Natural killer cell (primary cell): ENCODE measurements at regions of chr18 and their contacts with region 1.

Region 1: DNA sequence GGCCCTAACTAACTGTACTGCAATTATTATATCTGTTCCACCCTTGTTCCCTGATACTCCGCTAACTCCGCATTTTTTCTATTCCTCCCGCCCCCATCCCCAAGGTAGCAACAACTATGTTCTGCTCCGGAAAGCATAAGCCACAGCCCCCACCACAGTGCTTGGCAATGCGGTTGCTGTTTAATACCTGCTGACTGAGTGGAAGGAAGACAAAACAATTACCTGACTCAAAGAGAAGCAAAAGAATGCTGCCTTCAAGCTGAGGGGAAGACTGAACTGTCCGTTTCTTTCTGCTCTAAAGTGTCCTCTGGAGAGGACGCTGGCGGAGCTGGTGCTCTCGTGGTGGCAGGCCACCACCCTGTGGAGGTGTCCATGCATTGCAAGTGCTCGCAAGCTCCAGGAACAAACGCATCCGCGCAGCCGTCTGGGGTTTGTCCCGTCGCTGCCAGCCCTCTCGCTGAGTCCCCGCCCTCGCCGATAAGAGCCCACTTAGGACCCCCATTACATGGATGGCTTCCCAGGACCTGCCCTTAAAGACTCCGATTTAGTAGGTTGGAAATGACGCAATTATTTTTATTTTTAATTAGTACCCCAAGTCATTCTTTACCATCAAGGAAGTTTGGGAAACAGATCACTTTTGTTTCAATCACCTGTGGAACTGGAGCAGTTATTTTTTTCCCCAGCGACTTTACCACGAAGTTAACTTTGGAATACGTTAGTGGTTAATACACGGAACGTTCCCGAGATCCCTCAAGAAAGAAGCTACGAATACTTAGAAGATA is 1.6 kb upstream of the MYL12A start:
- DNase-seq: peak; percentile 73 to 88
- ATAC-seq: peak; percentile 65 to 84 (median 68)
- H3K4me3 ChIP-seq: peak overlapping the region; percentile 95
- H3K4me3 Mint-ChIP-seq: peak overlapping the region; percentile 98
- H3K27ac ChIP-seq: peak overlapping the region; percentile 85
- H3K27ac Mint-ChIP-seq: peak overlapping the region; percentile 88
- H3K4me1 ChIP-seq: peaks cover 31% of the 10 kb centered on the region
- H3K4me1 Mint-ChIP-seq: peaks cover 49 to 52% of the 10 kb centered on the region in 2 donors
- H3K27me3 ChIP-seq: no peaks in the 10 kb centered on the region
- H3K27me3 Mint-ChIP-seq: no peaks in the 10 kb centered on the region
- CTCF ChIP-seq: peak; percentile 81

Region 2: DNA sequence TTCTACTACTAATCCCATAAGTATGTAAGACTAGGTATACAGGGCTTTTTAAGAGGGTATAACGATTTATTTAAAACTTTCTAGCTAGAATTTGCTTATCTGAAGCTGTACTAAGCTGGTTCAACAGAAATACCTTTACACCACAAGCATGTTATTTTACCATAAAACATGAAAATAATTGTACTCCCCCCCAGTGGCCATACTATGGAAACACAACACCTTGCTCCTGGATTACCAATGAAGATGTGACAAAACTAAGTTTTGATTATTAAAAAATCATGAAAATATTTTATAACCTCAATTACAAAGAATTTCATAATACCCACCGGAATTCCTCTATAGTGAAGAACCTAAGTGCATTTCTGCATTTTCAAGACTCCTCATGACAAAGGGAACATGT is 260.4 kb before region 1 on chr18:
- intact Hi-C with region 1: loop called (anchors 5 kb)
- DNase-seq: peak in 1 of 2 donors; percentile 80
- ATAC-seq: peak; percentile 41 to 54 (median 42)
- H3K4me3 ChIP-seq: no peak overlapping the region
- H3K4me3 Mint-ChIP-seq: no peak overlapping the region
- H3K27ac ChIP-seq: no peak overlapping the region
- H3K27ac Mint-ChIP-seq: peak overlapping the region in 1 of 2 donors; percentile 4
- H3K4me1 ChIP-seq: peaks cover 12% of the 10 kb centered on the region
- H3K4me1 Mint-ChIP-seq: peaks cover 38 to 44% of the 10 kb centered on the region in 2 donors
- H3K27me3 ChIP-seq: no peaks in the 10 kb centered on the region
- H3K27me3 Mint-ChIP-seq: no peaks in the 10 kb centered on the region
- CTCF ChIP-seq: peak; percentile 74

Region 3: DNA sequence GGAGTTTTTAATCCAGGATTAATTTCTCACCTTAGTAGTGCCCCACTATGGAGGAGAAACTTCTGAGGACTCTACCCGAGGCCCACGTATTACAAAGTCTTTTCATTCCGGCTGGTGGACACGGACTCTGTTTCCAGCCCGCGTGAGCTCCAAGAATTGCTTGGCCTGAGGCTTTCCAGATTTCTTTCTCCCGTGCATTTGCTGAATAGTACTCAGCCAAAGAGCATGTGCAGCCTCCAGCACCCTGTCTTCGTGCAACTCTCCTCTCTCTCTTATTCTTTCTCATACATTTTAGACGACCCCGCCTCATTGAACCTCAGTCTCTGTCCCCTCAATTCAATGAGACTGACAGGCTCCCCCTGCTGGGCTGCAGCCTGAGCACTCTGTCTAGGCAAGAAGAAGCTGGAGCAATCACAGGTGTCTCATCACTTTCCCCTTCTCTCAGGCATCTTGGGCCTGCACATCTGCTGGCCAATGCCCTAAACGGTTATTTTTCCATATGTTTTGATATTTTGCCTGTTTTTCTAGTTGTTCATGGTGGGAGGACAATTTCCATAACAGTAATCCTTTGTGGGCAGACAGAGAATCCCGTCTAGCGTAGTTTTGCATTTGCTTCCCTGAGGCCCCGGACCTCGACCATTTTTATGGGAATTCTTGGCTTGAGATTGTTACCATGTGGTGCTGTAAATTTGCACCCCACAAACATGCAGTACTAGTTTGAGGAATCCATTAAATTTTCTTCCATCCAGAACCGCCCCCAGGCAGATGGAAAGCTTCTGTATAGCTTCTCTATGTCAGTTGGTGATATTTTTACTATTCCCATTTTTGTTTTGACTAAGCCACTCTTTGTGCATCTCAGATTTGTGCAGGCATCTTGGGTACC is 183.0 kb before region 1 on chr18:
- intact Hi-C with region 1: loop called (anchors 2 kb)
- DNase-seq: peak; percentile 37 to 82
- ATAC-seq: no peak
- H3K4me3 ChIP-seq: no peak overlapping the region
- H3K4me3 Mint-ChIP-seq: peak overlapping the region; percentile 60
- H3K27ac ChIP-seq: peak overlapping the region; percentile 90
- H3K27ac Mint-ChIP-seq: peak overlapping the region; percentile 87 to 99
- H3K4me1 ChIP-seq: peaks cover 70% of the 10 kb centered on the region
- H3K4me1 Mint-ChIP-seq: peaks cover 68 to 75% of the 10 kb centered on the region in 2 donors
- H3K27me3 ChIP-seq: no peaks in the 10 kb centered on the region
- H3K27me3 Mint-ChIP-seq: no peaks in the 10 kb centered on the region
- CTCF ChIP-seq: peak; percentile 66

Region 4: GRCh38 chr18:3261371-3262246 is 15.6 kb after region 1 on chr18 and contains the start of gene MYL12B:
- intact Hi-C with region 1: loop called (anchors 1 kb)
- DNase-seq: peak; percentile 82 to 91
- ATAC-seq: peak; percentile 72 to 88 (median 86)
- H3K4me3 ChIP-seq: peak within 1 kb of the TSS; percentile 96
- H3K4me3 Mint-ChIP-seq: peak within 1 kb of the TSS; percentile 94
- H3K27ac ChIP-seq: peak within 1 kb of the TSS; percentile 99
- H3K27ac Mint-ChIP-seq: peak within 1 kb of the TSS; percentile 88
- H3K4me1 ChIP-seq: peaks cover 36% of the 10 kb centered on the region
- H3K4me1 Mint-ChIP-seq: peaks cover 82 to 85% of the 10 kb centered on the region in 2 donors
- H3K27me3 ChIP-seq: no peaks in the 10 kb centered on the region
- H3K27me3 Mint-ChIP-seq: no peaks in the 10 kb centered on the region
- CTCF ChIP-seq: no peak
- total RNA-seq, gene MYL12B: 204 to 214 (median 210) TPM

Region 5: GRCh38 chr18:3593904-3594661 is 348.0 kb after region 1 on chr18:
- intact Hi-C with region 1: loop called (anchors 1 kb)
- DNase-seq: peak; percentile 86 to 96
- ATAC-seq: peak; percentile 67 to 87 (median 85)
- H3K4me3 ChIP-seq: peak overlapping the region; percentile 53
- H3K4me3 Mint-ChIP-seq: peak overlapping the region; percentile 93
- H3K27ac ChIP-seq: peak overlapping the region; percentile 97
- H3K27ac Mint-ChIP-seq: peak overlapping the region; percentile 99
- H3K4me1 ChIP-seq: peaks cover 47% of the 10 kb centered on the region
- H3K4me1 Mint-ChIP-seq: peaks cover 47% of the 10 kb centered on the region in 2 donors
- H3K27me3 ChIP-seq: no peaks in the 10 kb centered on the region
- H3K27me3 Mint-ChIP-seq: no peaks in the 10 kb centered on the region
- CTCF ChIP-seq: peak; percentile 75

Region 6: DNA sequence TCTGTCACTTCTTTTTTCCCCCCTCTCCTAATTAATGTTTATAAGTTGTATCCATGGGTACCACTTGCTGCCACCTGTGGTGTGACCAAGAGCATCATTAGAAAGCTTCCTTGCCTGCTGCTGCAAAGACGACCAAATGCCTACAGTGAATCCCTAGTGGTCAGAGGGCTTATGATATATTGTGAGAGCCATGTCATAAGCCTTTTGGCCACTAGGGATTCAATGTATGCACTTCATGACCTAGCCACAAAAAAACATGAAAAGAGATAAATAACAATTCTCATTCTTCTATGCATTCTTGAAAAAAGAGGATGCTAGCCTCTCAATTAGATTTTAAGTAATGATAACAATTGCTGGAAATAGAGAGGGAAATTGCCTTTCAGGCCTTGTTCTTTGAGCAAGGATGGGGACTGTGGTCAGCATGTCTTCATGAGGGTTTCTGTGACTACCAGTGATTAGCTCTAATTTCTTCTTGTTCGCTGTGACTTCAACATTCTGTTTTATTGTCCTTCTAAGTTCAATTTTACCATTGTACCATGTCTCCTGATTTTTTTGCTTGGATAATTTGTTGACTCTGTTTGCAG is 639.3 kb after region 1 on chr18:
- intact Hi-C with region 1: no loop called
- DNase-seq: no peak
- ATAC-seq: no peak
- H3K4me3 ChIP-seq: no peak overlapping the region
- H3K4me3 Mint-ChIP-seq: no peak overlapping the region
- H3K27ac ChIP-seq: no peak overlapping the region
- H3K27ac Mint-ChIP-seq: no peak overlapping the region
- H3K4me1 ChIP-seq: no peaks in the 10 kb centered on the region
- H3K4me1 Mint-ChIP-seq: no peaks in the 10 kb centered on the region
- H3K27me3 ChIP-seq: no peaks in the 10 kb centered on the region
- H3K27me3 Mint-ChIP-seq: peaks cover 3 to 9% of the 10 kb centered on the region in 2 donors
- CTCF ChIP-seq: no peak